Natural killer cell (primary cell): ENCODE measurements at regions of chr12 and their contacts with region 1.

Region 1: GRCh38 chr12:57476162-57476992 is 3.3 kb downstream of the ARHGAP9 start:
- DNase-seq: peak; percentile 77
- ATAC-seq: peak; percentile 26 to 64 (median 30)
- H3K4me3 ChIP-seq: peak overlapping the region; percentile 57
- H3K4me3 Mint-ChIP-seq: peak overlapping the region; percentile 85
- H3K27ac ChIP-seq: peak overlapping the region; percentile 99
- H3K27ac Mint-ChIP-seq: peak overlapping the region; percentile 97 to 98
- H3K4me1 ChIP-seq: peaks cover 92% of the 10 kb centered on the region
- H3K4me1 Mint-ChIP-seq: peaks cover 79 to 92% of the 10 kb centered on the region in 2 donors
- H3K27me3 ChIP-seq: no peaks in the 10 kb centered on the region
- H3K27me3 Mint-ChIP-seq: no peaks in the 10 kb centered on the region
- CTCF ChIP-seq: peak; percentile 83

Region 2: GRCh38 chr12:57462251-57462911 is 14.0 kb before region 1 on chr12:
- intact Hi-C with region 1: loop called (anchors 2 kb)
- DNase-seq: peak; percentile 80 to 95
- ATAC-seq: peak; percentile 66 to 83 (median 66)
- H3K4me3 ChIP-seq: peak overlapping the region; percentile 34
- H3K4me3 Mint-ChIP-seq: peak overlapping the region; percentile 93
- H3K27ac ChIP-seq: no peak overlapping the region
- H3K27ac Mint-ChIP-seq: peak overlapping the region; percentile 76 to 96
- H3K4me1 ChIP-seq: peaks cover 47% of the 10 kb centered on the region
- H3K4me1 Mint-ChIP-seq: peaks cover 59 to 63% of the 10 kb centered on the region in 2 donors
- H3K27me3 ChIP-seq: peaks cover 6% of the 10 kb centered on the region
- H3K27me3 Mint-ChIP-seq: peaks cover 0 to 15% of the 10 kb centered on the region in 2 donors
- CTCF ChIP-seq: peak; percentile 93

Region 3: GRCh38 chr12:57487597-57488401 is 11.4 kb after region 1 on chr12 and contains the start of gene MARS1:
- intact Hi-C with region 1: loop called (anchors 1 kb)
- DNase-seq: peak; percentile 83 to 97
- ATAC-seq: peak; percentile 96 to 99 (median 98)
- H3K4me3 ChIP-seq: peak within 1 kb of the TSS; percentile 86
- H3K4me3 Mint-ChIP-seq: peak within 1 kb of the TSS; percentile 92
- H3K27ac ChIP-seq: peak within 1 kb of the TSS; percentile 79
- H3K27ac Mint-ChIP-seq: peak within 1 kb of the TSS; percentile 88 to 92
- H3K4me1 ChIP-seq: peaks cover 20% of the 10 kb centered on the region
- H3K4me1 Mint-ChIP-seq: peaks cover 23 to 34% of the 10 kb centered on the region in 2 donors
- H3K27me3 ChIP-seq: no peaks in the 10 kb centered on the region
- H3K27me3 Mint-ChIP-seq: no peaks in the 10 kb centered on the region
- CTCF ChIP-seq: no peak
- total RNA-seq, gene MARS1: 200 to 237 (median 218) TPM

Region 4: GRCh38 chr12:57520053-57520871 is 43.9 kb after region 1 on chr12 and contains the start of gene DDIT3:
- intact Hi-C with region 1: loop called (anchors 1 kb)
- DNase-seq: peak; percentile 99 to 100
- ATAC-seq: peak; percentile 71 to 91 (median 78)
- H3K4me3 ChIP-seq: peak within 1 kb of the TSS; percentile 99
- H3K4me3 Mint-ChIP-seq: peak within 1 kb of the TSS; percentile 97
- H3K27ac ChIP-seq: peak within 1 kb of the TSS; percentile 99
- H3K27ac Mint-ChIP-seq: peak within 1 kb of the TSS; percentile 99
- H3K4me1 ChIP-seq: peaks cover 61% of the 10 kb centered on the region
- H3K4me1 Mint-ChIP-seq: peaks cover 36 to 79% of the 10 kb centered on the region in 2 donors
- H3K27me3 ChIP-seq: no peaks in the 10 kb centered on the region
- H3K27me3 Mint-ChIP-seq: no peaks in the 10 kb centered on the region
- CTCF ChIP-seq: no peak
- total RNA-seq, gene DDIT3: 117 to 318 (median 182) TPM

Region 5: DNA sequence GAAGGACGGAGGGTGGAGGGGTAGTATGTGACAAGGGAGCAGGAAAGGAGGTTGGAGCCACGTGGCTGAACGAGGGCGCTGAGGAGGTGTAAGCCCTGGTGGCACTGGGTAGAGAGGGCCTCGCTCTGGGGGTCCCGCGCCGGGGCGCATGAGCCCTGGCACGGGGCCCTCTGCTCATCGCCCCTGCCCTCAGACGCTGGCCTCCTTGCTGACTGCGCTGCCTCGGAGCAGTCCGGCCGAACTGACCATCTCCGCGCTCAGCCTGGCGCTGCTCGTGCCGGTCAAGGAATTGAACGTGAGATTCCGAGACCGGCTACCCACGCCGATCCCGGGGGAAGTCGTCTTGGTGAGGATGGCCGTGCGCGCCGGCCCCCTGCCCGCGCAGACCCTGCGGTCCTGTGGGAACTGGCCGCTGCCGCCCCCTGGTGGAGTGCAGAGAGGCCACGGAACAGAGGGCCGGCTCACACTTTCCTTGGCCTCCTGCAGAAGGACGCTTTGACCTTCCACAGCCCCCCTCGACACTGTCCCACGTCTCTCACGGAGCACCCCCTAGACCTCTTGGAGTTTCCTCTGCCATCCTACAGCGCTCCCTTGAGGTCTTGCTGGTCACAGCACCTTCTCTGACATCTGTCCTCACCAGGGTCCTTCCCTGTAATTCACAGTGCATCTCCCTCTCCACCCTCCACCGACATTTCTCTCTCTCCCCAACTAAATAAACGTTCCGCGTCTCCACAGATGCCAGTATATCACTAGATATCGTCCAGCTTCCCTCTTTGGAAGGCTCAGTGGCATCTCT is 145.3 kb after region 1 on chr12:
- intact Hi-C with region 1: loop called (anchors 5 kb)
- DNase-seq: peak; percentile 61 to 74
- ATAC-seq: peak; percentile 73 to 83 (median 75)
- H3K4me3 ChIP-seq: peak overlapping the region; percentile 28
- H3K4me3 Mint-ChIP-seq: peak overlapping the region; percentile 84
- H3K27ac ChIP-seq: no peak overlapping the region
- H3K27ac Mint-ChIP-seq: peak overlapping the region in 1 of 2 donors; percentile 63
- H3K4me1 ChIP-seq: peaks cover 30% of the 10 kb centered on the region
- H3K4me1 Mint-ChIP-seq: peaks cover 32% of the 10 kb centered on the region in 2 donors
- H3K27me3 ChIP-seq: peaks cover 76% of the 10 kb centered on the region
- H3K27me3 Mint-ChIP-seq: peaks cover 75 to 79% of the 10 kb centered on the region in 2 donors
- CTCF ChIP-seq: peak; percentile 96

Region 6: GRCh38 chr12:57722716-57723629 is 246.6 kb after region 1 on chr12:
- intact Hi-C with region 1: no loop called
- DNase-seq: no peak
- ATAC-seq: no peak
- H3K4me3 ChIP-seq: no peak overlapping the region
- H3K4me3 Mint-ChIP-seq: no peak overlapping the region
- H3K27ac ChIP-seq: no peak overlapping the region
- H3K27ac Mint-ChIP-seq: peak overlapping the region; percentile 58 to 74
- H3K4me1 ChIP-seq: peaks cover 6% of the 10 kb centered on the region
- H3K4me1 Mint-ChIP-seq: peaks cover 17 to 19% of the 10 kb centered on the region in 2 donors
- H3K27me3 ChIP-seq: no peaks in the 10 kb centered on the region
- H3K27me3 Mint-ChIP-seq: no peaks in the 10 kb centered on the region
- CTCF ChIP-seq: no peak

Region 7: DNA sequence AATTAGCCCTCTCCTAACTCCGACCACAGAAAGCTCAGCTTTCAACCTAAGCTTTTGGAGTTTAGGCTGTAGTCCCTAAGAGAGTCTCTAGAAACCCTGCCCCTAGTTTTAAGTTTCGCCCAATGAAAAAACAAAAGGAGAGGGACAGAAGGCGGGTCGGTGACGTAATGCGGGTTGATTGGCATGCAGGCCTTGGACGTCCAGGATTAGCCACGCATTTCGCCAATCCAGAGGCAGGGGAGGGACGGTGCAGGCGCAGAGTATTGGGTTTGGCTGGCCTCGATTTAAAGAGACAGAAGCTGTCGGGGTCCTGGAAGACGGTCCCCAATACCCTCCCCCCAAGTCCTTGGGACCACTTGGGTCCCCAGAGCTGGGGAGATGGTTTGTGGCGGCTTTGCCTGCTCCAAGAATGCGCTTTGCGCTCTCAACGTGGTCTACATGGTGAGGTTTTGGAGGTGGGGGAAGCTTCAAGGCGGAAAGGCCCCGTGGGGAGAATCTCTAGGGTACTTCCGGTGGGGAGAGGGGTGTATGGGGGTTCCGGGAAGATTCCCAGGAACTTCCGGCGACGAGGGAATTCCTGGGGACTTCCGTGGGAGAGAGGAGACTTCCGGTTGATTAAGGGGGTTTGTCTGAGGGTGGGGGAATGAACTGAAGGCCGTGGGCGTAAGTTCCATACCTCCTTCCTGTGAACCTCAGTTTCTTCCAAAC is 268.6 kb after region 1 on chr12 and contains the start of gene TSPAN31:
- intact Hi-C with region 1: loop called (anchors 5 kb)
- DNase-seq: peak; percentile 91 to 99
- ATAC-seq: peak; percentile 79 to 90 (median 84)
- H3K4me3 ChIP-seq: peak within 1 kb of the TSS; percentile 81
- H3K4me3 Mint-ChIP-seq: peak within 1 kb of the TSS; percentile 98
- H3K27ac ChIP-seq: peak within 1 kb of the TSS; percentile 91
- H3K27ac Mint-ChIP-seq: peak within 1 kb of the TSS; percentile 98 to 99
- H3K4me1 ChIP-seq: peaks cover 44% of the 10 kb centered on the region
- H3K4me1 Mint-ChIP-seq: peaks cover 47 to 49% of the 10 kb centered on the region in 2 donors
- H3K27me3 ChIP-seq: no peaks in the 10 kb centered on the region
- H3K27me3 Mint-ChIP-seq: no peaks in the 10 kb centered on the region
- CTCF ChIP-seq: no peak
- total RNA-seq, gene TSPAN31: 18.3 to 27.0 (median 23.5) TPM